WTC11 (cell line): ENCODE measurements at regions of chr19 and their contacts with region 1.

Region 1: GRCh38 chr19:55160128-55160985 is 2.8 kb upstream of the TNNI3 start:
- DNase-seq: peak; percentile 100
- ATAC-seq: peak; percentile 86
- H3K4me3 Mint-ChIP-seq: peak overlapping the region; percentile 64
- H3K27ac Mint-ChIP-seq: no peak overlapping the region
- H3K4me1 Mint-ChIP-seq: peaks cover 21% of the 10 kb centered on the region
- H3K27me3 Mint-ChIP-seq: peaks cover 77% of the 10 kb centered on the region
- CTCF ChIP-seq: peak; percentile 95

Region 2: GRCh38 chr19:55117636-55118391 is 42.5 kb before region 1 on chr19 and contains the start of gene PPP1R12C:
- CTCF ChIA-PET with region 1: interaction called, 17 read pairs
- POLR2A ChIA-PET with region 1: no interaction called
- DNase-seq: peak; percentile 98
- ATAC-seq: peak; percentile 78
- H3K4me3 Mint-ChIP-seq: peak within 1 kb of the TSS; percentile 98
- H3K27ac Mint-ChIP-seq: peak within 1 kb of the TSS; percentile 97
- H3K4me1 Mint-ChIP-seq: peaks cover 31% of the 10 kb centered on the region
- H3K27me3 Mint-ChIP-seq: peaks cover 21% of the 10 kb centered on the region
- CTCF ChIP-seq: no peak
- total RNA-seq, gene PPP1R12C: 88.4 to 99.3 TPM (median 92.3 TPM) in 3 replicates

Region 3: DNA sequence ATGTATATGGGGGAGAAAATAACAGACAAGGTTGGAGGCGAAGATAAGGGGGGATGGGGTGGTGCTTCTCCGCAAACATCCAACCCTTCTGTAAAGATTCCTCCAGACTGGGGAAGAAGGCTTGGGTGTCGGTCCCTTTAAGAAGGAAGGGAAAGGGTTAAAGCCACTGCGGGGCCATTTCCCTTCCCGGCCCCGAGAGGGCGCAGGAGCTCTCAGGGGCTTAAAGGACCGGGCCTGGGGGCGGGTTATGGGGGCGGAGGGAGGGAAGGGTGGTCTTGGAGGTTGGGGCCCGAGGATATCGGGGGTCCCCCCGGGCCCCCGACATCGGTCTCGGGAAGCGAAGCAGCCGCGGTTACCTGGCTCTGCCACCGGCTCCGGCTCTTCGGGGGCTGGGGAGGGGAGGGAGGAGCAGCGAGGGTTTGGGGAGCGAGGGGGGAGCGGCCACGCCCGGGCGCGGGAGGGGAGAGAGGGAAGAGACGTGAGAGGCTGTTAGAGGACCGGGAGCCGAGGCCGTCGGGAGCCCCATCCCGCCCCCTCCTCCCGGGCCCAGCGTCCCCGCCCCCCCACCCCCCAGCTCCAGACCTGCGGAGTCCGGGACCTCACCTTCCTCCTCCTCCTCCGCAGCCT is 14.2 kb before region 1 on chr19:
- CTCF ChIA-PET with region 1: interaction called, 108 read pairs
- POLR2A ChIA-PET with region 1: interaction called, 11 read pairs
- DNase-seq: peak; percentile 79
- ATAC-seq: peak; percentile 33
- H3K4me3 Mint-ChIP-seq: peak overlapping the region; percentile 65
- H3K27ac Mint-ChIP-seq: no peak overlapping the region
- H3K4me1 Mint-ChIP-seq: peaks cover 39% of the 10 kb centered on the region
- H3K27me3 Mint-ChIP-seq: peaks cover 26% of the 10 kb centered on the region
- CTCF ChIP-seq: peak; percentile 75

Region 4: GRCh38 chr19:55279770-55280643 is 119.7 kb after region 1 on chr19 and contains the start of gene HSPBP1:
- CTCF ChIA-PET with region 1: interaction called, 14 read pairs
- POLR2A ChIA-PET with region 1: no interaction called
- DNase-seq: peak; percentile 99
- ATAC-seq: peak; percentile 91
- H3K4me3 Mint-ChIP-seq: peak within 1 kb of the TSS; percentile 96
- H3K27ac Mint-ChIP-seq: peak within 1 kb of the TSS; percentile 99
- H3K4me1 Mint-ChIP-seq: peaks cover 18% of the 10 kb centered on the region
- H3K27me3 Mint-ChIP-seq: no peaks in the 10 kb centered on the region
- CTCF ChIP-seq: no peak
- total RNA-seq, gene HSPBP1: 57.1 to 65.2 TPM (median 60.9 TPM) in 3 replicates

Region 5: GRCh38 chr19:55418185-55418584 is 257.8 kb after region 1 on chr19:
- CTCF ChIA-PET with region 1: interaction called, 11 read pairs
- POLR2A ChIA-PET with region 1: no interaction called
- DNase-seq: peak; percentile 71
- ATAC-seq: peak; percentile 97
- H3K4me3 Mint-ChIP-seq: no peak overlapping the region
- H3K27ac Mint-ChIP-seq: no peak overlapping the region; the same call in 1 of the 2 replicates
- H3K4me1 Mint-ChIP-seq: peaks cover 2% of the 10 kb centered on the region
- H3K27me3 Mint-ChIP-seq: peaks cover 78% of the 10 kb centered on the region
- CTCF ChIP-seq: peak; percentile 40